ENCODE measurements at regions of chr15 and their contacts with region 1.

Region 1: DNA sequence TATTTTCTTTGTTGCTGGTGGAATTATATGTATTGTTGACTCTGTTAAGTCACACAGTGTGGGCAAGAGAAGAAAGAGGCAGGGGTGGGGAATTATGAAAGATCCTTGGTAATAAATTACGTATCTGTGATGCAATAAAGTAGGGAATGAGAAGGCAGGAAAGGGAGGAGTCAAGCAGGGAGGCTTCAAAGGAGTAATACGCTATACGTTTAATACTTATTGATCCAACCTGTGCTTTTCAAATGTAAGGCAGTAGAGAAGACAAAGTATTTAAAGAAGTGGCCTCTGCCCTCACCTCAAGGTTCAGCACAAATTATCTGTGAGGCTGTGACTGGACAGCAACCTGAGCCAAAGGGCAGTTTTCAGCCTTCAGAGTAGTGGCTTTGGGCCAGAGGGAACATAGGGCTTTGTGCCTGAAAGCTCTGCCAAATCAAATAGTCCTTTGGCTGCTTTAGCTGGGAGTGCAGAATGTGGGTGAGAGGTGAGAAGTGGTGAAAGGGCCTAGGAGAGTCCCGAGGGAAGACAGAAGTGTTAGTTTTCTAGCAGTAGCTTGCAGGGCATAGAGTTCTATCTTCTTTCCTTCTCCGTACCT is 1.2 kb upstream of the PLIN1 start:
- DNase-seq: peak; percentile 77 to 82
- ATAC-seq: peak; percentile 99
- H3K4me3 ChIP-seq: no peak overlapping the region
- H3K27ac ChIP-seq: peak overlapping the region; percentile 50 to 84 (median 78)
- H3K4me1 ChIP-seq: peaks cover 28 to 36% of the 10 kb centered on the region in 2 donors
- H3K27me3 ChIP-seq: no peaks in the 10 kb centered on the region
- CTCF ChIP-seq: no peak
- POLR2A ChIP-seq: no peak

Region 2: GRCh38 chr15:88913017-88913849 is 767.1 kb before region 1 on chr15 and contains the start of gene MFGE8:
- in situ Hi-C with region 1: no loop called
- intact Hi-C with region 1: loop called (anchors 10 kb)
- DNase-seq: peak; percentile 74 to 86
- ATAC-seq: peak; percentile 58 to 60
- H3K4me3 ChIP-seq: peak within 1 kb of the TSS; percentile 70 to 92 (median 86)
- H3K27ac ChIP-seq: peak within 1 kb of the TSS; percentile 92 to 99 (median 97)
- H3K4me1 ChIP-seq: peaks cover 40 to 42% of the 10 kb centered on the region in 2 donors
- H3K27me3 ChIP-seq: no peaks in the 10 kb centered on the region
- CTCF ChIP-seq: peak in 2 of 5 experiments; percentile 25 to 35
- POLR2A ChIP-seq: peak; percentile 99
- total RNA-seq, gene MFGE8: 239 to 437 (median 395) TPM